Common myeloid progenitor, CD34-positive (primary cell): ENCODE measurements at regions of chr1 and their contacts with region 1.

Region 1: GRCh38 chr1:48677306-48678287 is 99.1 kb downstream of the BEND5 start:
- DNase-seq: peak; percentile 50 to 71 (median 67)
- H3K4me3 ChIP-seq: no peak overlapping the region
- H3K27ac ChIP-seq: no peak overlapping the region
- H3K4me1 ChIP-seq: no peaks in the 10 kb centered on the region
- H3K27me3 ChIP-seq: peaks cover 0 to 2% (median 0%) of the 10 kb centered on the region in 5 experiments

Region 2: DNA sequence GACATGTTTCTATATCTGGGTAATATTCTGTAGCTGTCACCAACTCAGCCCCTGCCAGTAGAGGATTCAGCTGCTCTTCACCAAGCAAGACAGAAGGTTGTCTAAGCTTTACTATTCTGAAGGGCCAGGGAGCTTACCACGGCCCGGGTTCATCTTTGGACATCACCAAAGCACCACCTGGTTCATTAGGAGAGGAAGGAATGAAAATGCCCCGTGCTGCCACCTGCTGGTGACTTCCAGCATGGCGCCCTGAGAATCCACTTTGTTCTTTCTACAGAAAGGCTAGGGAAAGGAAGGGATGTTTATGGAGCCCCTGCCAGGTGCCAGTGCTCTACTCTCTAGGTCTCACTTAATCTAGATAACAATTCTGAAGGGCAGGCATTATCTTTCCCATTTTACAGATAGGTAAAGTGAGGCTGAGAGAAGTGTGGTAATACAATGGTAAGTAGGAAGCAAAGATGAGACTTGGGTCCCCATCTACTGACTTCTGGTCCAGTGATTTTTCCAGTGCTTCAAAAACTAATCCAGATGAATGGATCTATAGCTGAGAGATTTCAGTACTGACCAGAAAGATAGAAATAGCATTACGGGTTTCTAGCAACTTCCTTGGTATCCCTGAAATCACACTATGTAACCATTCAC is 19.6 kb after region 1 on chr1:
- CTCF ChIA-PET with region 1: interaction called, 11 read pairs
- POLR2A ChIA-PET with region 1: no interaction called
- DNase-seq: peak; percentile 11 to 53 (median 29)
- H3K4me3 ChIP-seq: no peak overlapping the region
- H3K27ac ChIP-seq: no peak overlapping the region
- H3K4me1 ChIP-seq: no peaks in the 10 kb centered on the region
- H3K27me3 ChIP-seq: peaks cover 0 to 7% (median 4%) of the 10 kb centered on the region in 5 experiments

Region 3: DNA sequence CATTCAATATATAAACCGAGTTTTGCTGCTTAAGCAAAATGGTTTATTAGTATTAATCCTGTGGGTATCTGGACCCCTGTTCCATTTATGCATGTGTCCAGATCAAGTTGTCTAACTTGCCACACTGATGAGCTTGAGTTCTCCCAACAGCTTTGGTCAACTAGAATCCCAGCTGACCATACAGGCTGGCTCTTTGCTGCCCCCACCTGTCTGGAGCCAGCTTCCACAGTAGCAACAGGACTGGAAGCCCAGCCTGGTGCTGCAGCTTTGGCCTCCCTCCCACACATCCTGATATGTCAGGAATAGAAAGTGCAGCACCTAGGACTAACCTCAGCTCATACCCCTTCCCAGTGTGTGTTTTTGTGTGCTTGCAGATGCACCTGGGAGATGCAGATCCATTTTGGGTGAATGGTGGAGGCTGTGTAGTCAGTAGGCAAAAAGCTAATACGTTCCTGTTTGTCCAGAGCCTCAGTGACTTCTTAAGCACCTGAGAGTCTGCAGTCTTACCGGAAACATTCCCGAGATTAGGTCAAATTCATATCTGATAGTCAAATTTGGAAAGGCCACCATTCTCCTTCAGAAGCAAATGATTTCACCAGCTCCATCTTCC is 140.0 kb after region 1 on chr1:
- CTCF ChIA-PET with region 1: interaction called, 43 read pairs
- POLR2A ChIA-PET with region 1: no interaction called
- DNase-seq: peak; percentile 33 to 50 (median 39)
- H3K4me3 ChIP-seq: no peak overlapping the region
- H3K27ac ChIP-seq: no peak overlapping the region
- H3K4me1 ChIP-seq: no peaks in the 10 kb centered on the region
- H3K27me3 ChIP-seq: no peaks in the 10 kb centered on the region

Region 4: DNA sequence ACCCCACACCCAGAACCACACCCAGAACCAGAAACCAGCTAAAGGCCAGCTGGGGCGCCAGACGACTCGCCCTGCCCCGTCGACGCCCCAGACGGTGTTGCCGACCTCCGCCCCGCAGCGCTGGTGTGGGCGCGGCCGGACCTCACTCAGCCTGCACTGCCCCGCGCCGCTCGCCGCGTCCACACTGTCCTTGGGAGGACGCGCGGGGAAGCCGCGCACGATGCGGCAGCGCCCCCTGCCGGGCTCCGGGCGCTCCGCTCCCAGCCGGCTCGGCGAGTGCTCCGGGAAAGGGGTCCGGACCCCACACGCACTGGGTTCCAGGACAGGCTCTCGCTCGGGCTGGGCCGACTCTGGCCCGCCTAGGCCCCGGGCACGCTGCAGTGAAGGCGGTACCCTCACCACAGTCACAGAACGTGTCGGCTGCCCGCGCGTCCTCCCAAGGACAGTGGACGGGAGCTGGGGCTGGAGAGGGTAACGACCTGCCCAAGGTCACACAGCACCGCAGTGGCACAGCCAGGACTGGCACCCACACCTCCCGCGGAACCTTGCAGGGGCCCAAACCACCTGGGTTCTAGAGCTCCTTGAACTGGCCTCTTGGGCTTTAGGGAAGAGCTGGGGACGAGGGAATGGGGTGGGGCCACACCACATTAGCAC is 1655.5 kb after region 1 on chr1:
- CTCF ChIA-PET with region 1: interaction called, 11 read pairs
- POLR2A ChIA-PET with region 1: no interaction called
- DNase-seq: peak in 2 of 3 donors; percentile 58 to 60
- H3K4me3 ChIP-seq: peak overlapping the region in 6 of 7 experiments; percentile 39 to 78 (median 59)
- H3K27ac ChIP-seq: no peak overlapping the region
- H3K4me1 ChIP-seq: peaks cover 0 to 17% (median 15%) of the 10 kb centered on the region in 4 experiments
- H3K27me3 ChIP-seq: peaks cover 0 to 22% (median 6%) of the 10 kb centered on the region in 5 experiments